Right cardiac atrium (tissue), 5 donors: ENCODE measurements at regions of chr2 and their contacts with region 1.

Region 1: GRCh38 chr2:31328026-31328425 is 86.5 kb downstream of the XDH start:
- DNase-seq: no peak
- ATAC-seq: no peak
- H3K4me3 ChIP-seq: no peak overlapping the region
- H3K27ac ChIP-seq: no peak overlapping the region
- H3K4me1 ChIP-seq: no peaks in the 10 kb centered on the region
- H3K27me3 ChIP-seq: no peaks in the 10 kb centered on the region

Region 2: GRCh38 chr2:31233741-31234682 is 94.0 kb before region 1 on chr2 and contains the start of gene EHD3:
- intact Hi-C with region 1: loop called in 2 of 4 experiments (anchors 5 kb)
- DNase-seq: peak; percentile 89 to 95 (median 95)
- ATAC-seq: peak; percentile 98 to 99
- H3K4me3 ChIP-seq: peak within 1 kb of the TSS; percentile 52
- H3K27ac ChIP-seq: no peak within 1 kb of the TSS
- H3K4me1 ChIP-seq: peaks cover 7% of the 10 kb centered on the region
- H3K27me3 ChIP-seq: no peaks in the 10 kb centered on the region
- total RNA-seq, gene EHD3: 9.5 to 13.3 (median 10.9) TPM

Region 3: GRCh38 chr2:31451287-31451686 is 123.3 kb after region 1 on chr2:
- intact Hi-C with region 1: no loop called
- DNase-seq: no peak
- ATAC-seq: no peak
- H3K4me3 ChIP-seq: no peak overlapping the region
- H3K27ac ChIP-seq: no peak overlapping the region
- H3K4me1 ChIP-seq: no peaks in the 10 kb centered on the region
- H3K27me3 ChIP-seq: no peaks in the 10 kb centered on the region